Heart left ventricle (tissue), 16 donors: ENCODE measurements at regions of chr5 and their contacts with region 1.

Region 1: DNA sequence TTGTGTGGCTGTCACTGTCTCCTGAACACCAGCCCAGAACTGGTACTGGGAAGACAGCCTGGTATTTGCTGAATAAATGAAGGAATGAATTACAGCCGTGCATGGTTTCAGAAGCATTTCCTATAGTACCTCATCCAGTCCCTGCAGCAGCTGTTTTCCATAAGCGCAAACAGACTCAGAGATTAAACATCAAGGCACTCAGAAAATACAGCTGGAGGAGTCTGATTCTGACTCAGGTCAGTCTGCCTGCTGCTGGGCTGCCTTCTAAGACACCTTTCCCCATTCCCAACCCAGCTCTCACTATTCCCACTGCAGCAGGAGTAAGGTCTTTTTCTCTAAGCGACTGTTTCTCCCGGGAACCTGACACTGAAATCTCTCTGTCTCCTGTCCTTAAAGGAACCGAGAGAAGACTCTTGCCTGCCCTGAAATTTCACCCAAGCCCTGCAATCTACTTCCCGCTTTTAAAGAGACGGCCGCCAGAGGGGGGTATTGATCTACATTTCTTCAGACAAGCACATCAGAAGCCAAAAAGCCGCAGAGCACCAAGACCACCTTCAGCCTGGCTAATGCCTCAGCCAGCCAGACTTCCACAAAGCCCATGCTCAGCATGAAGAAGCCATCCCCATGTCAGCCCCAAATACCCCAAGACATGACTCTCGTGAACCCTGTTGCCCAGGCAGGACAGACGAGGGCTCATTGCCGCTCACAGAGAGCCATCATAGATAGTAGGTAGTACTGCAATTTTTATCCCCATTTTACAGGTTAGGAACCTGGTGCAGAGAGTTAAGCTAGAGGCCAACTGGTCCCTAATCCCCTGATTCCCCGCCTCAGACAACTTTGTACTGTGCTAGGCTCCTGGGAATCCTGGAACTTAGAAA is 5.4 kb upstream of the FOXI1 start:
- DNase-seq: peak; percentile 62 to 78 (median 70)
- ATAC-seq: peak in 3 of 4 donors; percentile 56 to 66 (median 62)
- H3K4me3 ChIP-seq: no peak overlapping the region
- H3K27ac ChIP-seq: no peak overlapping the region
- H3K4me1 ChIP-seq: peaks cover 0 to 31% (median 0%) of the 10 kb centered on the region in 12 donors
- H3K27me3 ChIP-seq: no peaks in the 10 kb centered on the region
- CTCF ChIP-seq: peak; percentile 41 to 75 (median 62)
- POLR2A ChIP-seq: no peak

Region 2: GRCh38 chr5:170183816-170184687 is 83.7 kb after region 1 on chr5:
- intact Hi-C with region 1: loop called (anchors 1 to 2 kb)
- DNase-seq: peak; percentile 45 to 67 (median 61)
- ATAC-seq: peak in 3 of 4 donors; percentile 81 to 85 (median 82)
- H3K4me3 ChIP-seq: no peak overlapping the region
- H3K27ac ChIP-seq: no peak overlapping the region
- H3K4me1 ChIP-seq: peaks cover 0 to 4% (median 0%) of the 10 kb centered on the region in 12 donors
- H3K27me3 ChIP-seq: peaks cover 0 to 11% (median 0%) of the 10 kb centered on the region in 9 donors
- CTCF ChIP-seq: peak; percentile 63 to 81 (median 74)
- POLR2A ChIP-seq: no peak

Region 3: GRCh38 chr5:170216266-170216864 is 116.1 kb after region 1 on chr5:
- intact Hi-C with region 1: loop called in 2 of 10 experiments (anchors 2 to 10 kb)
- DNase-seq: no peak
- ATAC-seq: peak in 2 of 4 donors; percentile 49 to 71
- H3K4me3 ChIP-seq: no peak overlapping the region
- H3K27ac ChIP-seq: no peak overlapping the region
- H3K4me1 ChIP-seq: peaks cover 0 to 5% (median 0%) of the 10 kb centered on the region in 12 donors
- H3K27me3 ChIP-seq: peaks cover 0 to 8% (median 0%) of the 10 kb centered on the region in 9 donors
- CTCF ChIP-seq: peak in 11 of 12 donors; percentile 17 to 60 (median 44)
- POLR2A ChIP-seq: no peak

Region 4: GRCh38 chr5:170411100-170411499 is 310.8 kb after region 1 on chr5:
- intact Hi-C with region 1: loop called in 3 of 10 experiments (anchors 5 to 10 kb)
- DNase-seq: no peak
- ATAC-seq: no peak
- H3K4me3 ChIP-seq: no peak overlapping the region
- H3K27ac ChIP-seq: no peak overlapping the region
- H3K4me1 ChIP-seq: peaks cover 0 to 10% (median 0%) of the 10 kb centered on the region in 12 donors
- H3K27me3 ChIP-seq: no peaks in the 10 kb centered on the region
- CTCF ChIP-seq: no peak
- POLR2A ChIP-seq: no peak

Region 5: GRCh38 chr5:170420780-170421412 is 320.6 kb after region 1 on chr5:
- intact Hi-C with region 1: loop called in 7 of 10 experiments (anchors 2 to 10 kb)
- DNase-seq: peak in 4 of 5 donors; percentile 55 to 63 (median 59)
- ATAC-seq: peak in 3 of 4 donors; percentile 67 to 83 (median 76)
- H3K4me3 ChIP-seq: no peak overlapping the region
- H3K27ac ChIP-seq: peak overlapping the region in 1 of 12 donors; percentile 14
- H3K4me1 ChIP-seq: peaks cover 0 to 34% (median 2%) of the 10 kb centered on the region in 12 donors
- H3K27me3 ChIP-seq: no peaks in the 10 kb centered on the region
- CTCF ChIP-seq: peak; percentile 63 to 86 (median 78)
- POLR2A ChIP-seq: no peak

Region 6: DNA sequence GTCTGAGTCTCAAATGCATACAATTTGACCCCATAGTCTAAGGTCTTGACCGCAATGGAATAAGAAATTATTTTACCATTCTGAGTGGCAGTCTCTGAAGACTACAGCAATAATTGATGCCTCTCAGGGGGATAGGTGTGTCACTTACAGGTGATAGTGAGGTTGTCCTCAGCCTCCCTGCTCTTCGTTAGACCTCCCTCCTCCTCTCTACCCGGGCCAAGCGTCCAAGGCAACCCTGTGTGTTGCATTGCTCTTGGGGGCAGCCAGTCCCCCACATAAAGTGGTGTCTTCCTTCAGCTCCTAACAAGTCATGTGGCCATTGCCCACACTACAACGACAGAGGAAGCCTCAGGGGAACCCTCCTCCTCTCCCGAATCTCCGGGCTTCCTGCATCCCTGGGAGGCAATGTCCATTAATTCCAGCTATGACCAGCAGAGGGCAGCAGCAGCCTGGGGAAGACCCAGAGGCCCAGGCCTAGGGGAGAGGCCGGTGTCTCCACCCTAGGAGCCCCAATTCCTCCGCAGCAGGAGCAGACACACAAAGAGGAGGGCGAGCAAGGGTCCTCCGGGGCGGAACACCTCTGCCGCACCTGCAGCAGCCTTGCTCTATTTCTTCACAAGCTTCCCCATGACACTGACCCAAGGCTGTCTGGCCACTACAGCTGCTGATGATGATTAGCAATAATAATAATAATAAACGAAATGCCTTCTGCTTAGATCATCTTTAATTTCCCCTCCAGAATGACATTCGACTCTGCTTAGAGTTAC is 538.3 kb after region 1 on chr5:
- intact Hi-C with region 1: loop called in 1 of 10 experiments (anchors 10 kb)
- DNase-seq: peak; percentile 52 to 81 (median 62)
- ATAC-seq: peak; percentile 18 to 82 (median 67)
- H3K4me3 ChIP-seq: no peak overlapping the region
- H3K27ac ChIP-seq: no peak overlapping the region
- H3K4me1 ChIP-seq: peaks cover 0 to 16% (median 11%) of the 10 kb centered on the region in 12 donors
- H3K27me3 ChIP-seq: peaks cover 0 to 3% (median 0%) of the 10 kb centered on the region in 9 donors
- CTCF ChIP-seq: peak; percentile 78 to 94 (median 88)
- POLR2A ChIP-seq: no peak